Activated CD4-positive, alpha-beta T cell treated with anti-CD3 and anti-CD28 coated beads, Interleukin-2, amount 10 ng/mL, durations not matched to agents 24 days and 14 days (primary cell): ENCODE measurements at regions of chr10 and their contacts with region 1.

Region 1: DNA sequence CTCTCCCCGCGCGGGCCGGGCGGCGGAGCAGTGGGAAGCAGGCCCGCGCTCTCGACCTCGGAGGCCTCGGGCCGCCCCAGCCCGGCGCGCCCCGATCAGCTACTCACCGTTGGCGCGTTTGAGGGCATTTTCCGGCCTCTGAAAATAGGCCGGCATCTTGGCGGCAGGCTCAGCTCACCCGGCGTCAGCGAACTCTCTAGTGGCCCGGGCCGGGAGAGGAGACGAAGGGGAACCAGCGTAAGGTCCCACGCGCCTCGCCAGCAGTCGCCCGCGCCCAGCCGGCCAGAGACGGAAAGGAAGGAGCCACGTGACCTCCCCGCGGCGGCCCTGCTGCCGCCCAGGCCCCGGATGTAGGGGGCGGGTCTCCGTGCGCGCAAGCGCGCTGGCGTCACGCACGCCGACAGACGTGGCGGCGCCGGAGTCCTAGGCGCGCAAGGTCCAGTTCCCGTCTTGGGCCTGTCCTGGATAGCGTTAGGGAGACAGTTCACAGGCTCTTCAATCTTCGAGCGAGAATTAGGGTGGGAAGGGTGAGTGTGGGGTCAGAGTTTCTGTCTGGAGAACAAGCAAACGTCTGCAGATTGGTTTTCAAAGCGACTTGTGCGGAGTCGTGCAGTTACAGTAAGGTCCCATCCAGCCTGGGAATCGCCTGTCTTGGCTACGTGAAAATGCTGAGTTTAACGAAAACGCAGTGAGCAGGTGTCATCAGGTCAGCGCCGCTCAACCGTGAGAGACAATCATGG is at the start of gene EIF3A:
- DNase-seq: peak; percentile 99
- H3K4me3 Mint-ChIP-seq: peak within 1 kb of the TSS; percentile 87
- H3K27ac Mint-ChIP-seq: peak within 1 kb of the TSS; percentile 92
- H3K4me1 Mint-ChIP-seq: peaks cover 29% of the 10 kb centered on the region
- H3K27me3 Mint-ChIP-seq: no peaks in the 10 kb centered on the region
- total RNA-seq, gene EIF3A: 179 and 183 TPM in 2 replicates

Region 2: DNA sequence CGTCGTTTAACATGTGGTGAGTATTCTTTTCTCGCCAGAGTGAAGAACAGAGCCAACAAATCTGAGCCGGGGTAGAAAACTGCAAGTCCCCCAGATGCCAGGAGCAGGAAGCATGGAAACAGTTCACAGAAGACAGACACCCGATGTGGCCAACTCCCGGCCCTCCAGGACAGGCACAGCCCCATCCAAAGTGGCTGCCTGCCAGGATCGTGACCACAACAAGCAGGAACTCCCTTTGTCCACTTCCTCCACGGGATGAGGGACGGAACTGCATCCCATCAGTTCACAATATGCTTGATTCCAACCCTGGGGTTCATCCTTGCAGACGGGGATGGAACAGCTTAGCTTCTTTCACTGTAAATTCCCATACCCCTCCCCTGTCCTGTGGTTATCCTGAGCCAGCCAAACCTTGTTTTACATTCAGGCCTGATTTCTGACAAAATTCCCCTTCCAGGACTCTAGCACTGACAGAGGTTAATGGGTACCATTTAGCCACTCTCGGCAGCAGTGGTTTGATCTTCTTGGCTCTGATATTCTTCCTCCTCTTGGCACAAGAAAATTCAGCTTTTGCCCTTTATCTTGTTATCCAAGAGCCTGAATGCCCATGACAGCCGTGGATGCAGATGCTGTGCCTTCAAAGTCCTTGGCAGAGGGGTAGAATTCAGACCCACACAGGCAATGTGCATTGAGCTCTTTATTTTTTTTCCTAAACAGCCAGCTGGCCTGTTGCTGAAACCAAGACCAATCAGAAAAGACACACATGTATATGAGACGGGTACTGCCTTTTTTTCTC is 633.0 kb before region 1 on chr10:
- intact Hi-C with region 1: no loop called
- DNase-seq: peak; percentile 21
- H3K4me3 Mint-ChIP-seq: no peak overlapping the region
- H3K27ac Mint-ChIP-seq: no peak overlapping the region
- H3K4me1 Mint-ChIP-seq: no peaks in the 10 kb centered on the region
- H3K27me3 Mint-ChIP-seq: peaks cover 20% of the 10 kb centered on the region

Region 3: GRCh38 chr10:118986815-118987790 is 93.6 kb before region 1 on chr10:
- intact Hi-C with region 1: no loop called
- DNase-seq: no peak
- H3K4me3 Mint-ChIP-seq: no peak overlapping the region
- H3K27ac Mint-ChIP-seq: no peak overlapping the region
- H3K4me1 Mint-ChIP-seq: peaks cover 12% of the 10 kb centered on the region
- H3K27me3 Mint-ChIP-seq: peaks cover 22% of the 10 kb centered on the region

Region 4: GRCh38 chr10:119028900-119029612 is 51.6 kb before region 1 on chr10:
- intact Hi-C with region 1: loop called (anchors 2 kb)
- DNase-seq: peak; percentile 94
- H3K4me3 Mint-ChIP-seq: peak overlapping the region; percentile 66
- H3K27ac Mint-ChIP-seq: no peak overlapping the region
- H3K4me1 Mint-ChIP-seq: peaks cover 20% of the 10 kb centered on the region
- H3K27me3 Mint-ChIP-seq: peaks cover 13% of the 10 kb centered on the region

Region 5: DNA sequence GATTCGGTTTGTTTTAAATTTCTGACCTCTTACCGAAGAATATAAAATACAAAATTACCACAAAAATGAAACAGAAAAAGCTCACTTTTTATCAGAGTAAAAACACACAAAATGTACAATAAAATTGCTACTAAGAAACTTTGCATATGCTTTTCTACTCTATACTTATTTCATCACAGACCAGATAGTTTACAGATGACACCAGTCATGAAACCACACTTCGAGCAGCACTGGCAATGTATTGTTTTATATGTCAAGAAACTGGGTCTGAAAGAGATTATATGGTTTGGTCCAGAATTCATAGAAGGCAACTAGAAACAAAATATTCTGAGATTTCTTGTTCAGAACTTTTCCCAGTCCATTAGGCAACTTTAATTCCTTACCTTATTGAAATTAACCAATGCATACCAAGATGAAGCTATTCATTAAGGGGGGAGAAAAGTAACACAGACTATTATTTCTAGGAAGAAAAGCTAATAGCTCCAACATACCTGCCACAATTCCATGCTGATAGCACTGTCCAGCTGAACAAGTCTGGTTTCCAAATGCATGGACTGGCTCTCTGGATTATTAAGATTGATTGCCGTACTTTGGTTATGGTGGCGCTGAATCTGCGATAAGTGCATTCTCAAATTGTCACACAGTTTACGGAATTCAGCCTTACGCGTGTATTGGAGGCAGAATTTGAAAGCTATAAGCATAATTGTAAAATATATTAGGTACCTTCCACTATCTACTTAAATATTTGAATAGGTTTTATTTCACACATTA is 10.1 kb before region 1 on chr10:
- intact Hi-C with region 1: loop called (anchors 1 kb)
- DNase-seq: no peak
- H3K4me3 Mint-ChIP-seq: no peak overlapping the region
- H3K27ac Mint-ChIP-seq: peak overlapping the region; percentile 65
- H3K4me1 Mint-ChIP-seq: peaks cover 30% of the 10 kb centered on the region
- H3K27me3 Mint-ChIP-seq: no peaks in the 10 kb centered on the region

Region 6: DNA sequence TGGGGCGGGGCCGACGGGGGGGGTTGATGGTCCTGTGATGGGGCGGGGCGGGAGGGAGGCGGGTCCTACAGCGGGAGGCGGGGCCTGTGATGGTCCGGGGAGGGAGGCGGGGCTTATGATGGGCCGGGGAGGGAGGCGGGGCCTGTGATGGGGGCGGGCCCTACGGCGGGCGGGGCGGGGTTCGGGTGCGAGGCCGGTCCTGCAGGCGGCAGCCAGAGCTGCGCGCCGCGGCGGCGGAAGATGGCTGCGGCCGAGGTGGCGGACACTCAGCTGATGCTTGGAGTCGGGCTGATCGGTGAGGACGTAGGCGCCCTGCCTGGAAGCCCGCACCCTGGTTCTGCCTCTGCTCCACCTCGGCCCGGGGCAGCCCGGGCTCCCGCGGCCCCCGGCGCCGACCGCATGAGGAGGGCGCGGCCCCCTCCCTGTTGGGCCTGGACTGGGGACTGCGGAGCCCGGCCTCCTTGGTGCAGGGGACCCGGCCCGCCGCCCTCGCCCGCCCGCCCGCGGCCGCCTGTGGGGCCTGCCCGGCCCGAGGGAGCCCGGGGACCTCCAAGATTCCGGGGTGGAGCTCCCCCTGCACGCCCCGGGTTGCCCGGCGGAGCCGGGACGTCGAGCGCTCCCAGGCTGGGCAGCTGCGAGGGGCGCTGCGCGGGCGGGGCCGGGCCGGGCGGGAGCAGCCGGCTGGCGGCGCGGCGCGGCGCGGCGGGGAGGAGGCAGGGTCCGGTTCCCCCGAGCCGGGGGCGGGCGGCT is 23.4 kb after region 1 on chr10 and contains the start of gene DENND10:
- intact Hi-C with region 1: loop called (anchors 1 kb)
- DNase-seq: peak; percentile 91
- H3K4me3 Mint-ChIP-seq: peak within 1 kb of the TSS; percentile 84
- H3K27ac Mint-ChIP-seq: peak within 1 kb of the TSS; percentile 66
- H3K4me1 Mint-ChIP-seq: peaks cover 29% of the 10 kb centered on the region
- H3K27me3 Mint-ChIP-seq: peaks cover 2% of the 10 kb centered on the region
- total RNA-seq, gene DENND10: 18.6 and 23.2 TPM in 2 replicates

Region 7: GRCh38 chr10:119131512-119132240 is 51.0 kb after region 1 on chr10:
- intact Hi-C with region 1: loop called (anchors 1 kb)
- DNase-seq: peak; percentile 89
- H3K4me3 Mint-ChIP-seq: peak overlapping the region; percentile 83
- H3K27ac Mint-ChIP-seq: peak overlapping the region; percentile 95
- H3K4me1 Mint-ChIP-seq: peaks cover 52% of the 10 kb centered on the region
- H3K27me3 Mint-ChIP-seq: no peaks in the 10 kb centered on the region

Region 8: DNA sequence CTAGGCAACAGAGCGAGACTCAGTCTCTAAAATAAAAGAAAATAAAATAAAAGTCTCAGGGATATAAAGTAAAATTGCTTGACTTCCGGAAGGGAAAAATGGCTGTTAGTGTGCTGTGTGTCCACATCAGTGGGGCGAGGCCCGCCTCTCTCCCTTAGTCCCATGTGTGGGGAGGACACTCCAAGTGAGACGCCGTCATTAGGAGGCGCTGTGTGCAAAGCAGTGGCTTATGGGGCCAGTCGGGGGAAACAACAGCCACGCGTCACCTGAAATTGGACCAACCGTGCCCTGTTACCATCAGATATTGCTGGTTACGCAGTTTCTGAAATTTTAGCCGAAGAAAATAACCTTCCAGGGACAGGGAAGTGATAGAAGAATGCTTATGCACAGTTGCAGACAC is 69.0 kb after region 1 on chr10:
- intact Hi-C with region 1: no loop called
- DNase-seq: no peak
- H3K4me3 Mint-ChIP-seq: no peak overlapping the region
- H3K27ac Mint-ChIP-seq: no peak overlapping the region
- H3K4me1 Mint-ChIP-seq: peaks cover 2% of the 10 kb centered on the region
- H3K27me3 Mint-ChIP-seq: no peaks in the 10 kb centered on the region